ENCODE measurements at regions of chr17 and their contacts with region 1.

Region 1: GRCh38 chr17:44947461-44948314 is at the start of gene KIF18B:
- DNase-seq: peak; percentile 95 to 96
- H3K4me3 ChIP-seq: peak within 1 kb of the TSS; percentile 79
- H3K4me3 Mint-ChIP-seq: peak within 1 kb of the TSS; percentile 90
- H3K27ac Mint-ChIP-seq: peak within 1 kb of the TSS; percentile 92
- H3K4me1 ChIP-seq: peaks cover 8% of the 10 kb centered on the region
- H3K4me1 Mint-ChIP-seq: peaks cover 8% of the 10 kb centered on the region
- H3K27me3 ChIP-seq: no peaks in the 10 kb centered on the region
- H3K27me3 Mint-ChIP-seq: no peaks in the 10 kb centered on the region
- CTCF ChIP-seq: no peak
- total RNA-seq, gene KIF18B: 63.6 and 68.4 TPM in 2 replicates

Region 2: GRCh38 chr17:44899069-44899782 is 48.5 kb before region 1 on chr17 and contains the start of gene EFTUD2:
- CTCF ChIA-PET with region 1: no interaction called
- POLR2A ChIA-PET with region 1: interaction called, 3 read pairs
- intact Hi-C with region 1: loop called (anchors 2 kb)
- DNase-seq: peak; percentile 93 to 94
- H3K4me3 ChIP-seq: peak within 1 kb of the TSS; percentile 60
- H3K4me3 Mint-ChIP-seq: peak within 1 kb of the TSS; percentile 77
- H3K27ac Mint-ChIP-seq: peak within 1 kb of the TSS; percentile 100
- H3K4me1 ChIP-seq: no peaks in the 10 kb centered on the region
- H3K4me1 Mint-ChIP-seq: peaks cover 7% of the 10 kb centered on the region
- H3K27me3 ChIP-seq: no peaks in the 10 kb centered on the region
- H3K27me3 Mint-ChIP-seq: no peaks in the 10 kb centered on the region
- CTCF ChIP-seq: no peak
- total RNA-seq, gene EFTUD2: 175 and 186 TPM in 2 replicates

Region 3: DNA sequence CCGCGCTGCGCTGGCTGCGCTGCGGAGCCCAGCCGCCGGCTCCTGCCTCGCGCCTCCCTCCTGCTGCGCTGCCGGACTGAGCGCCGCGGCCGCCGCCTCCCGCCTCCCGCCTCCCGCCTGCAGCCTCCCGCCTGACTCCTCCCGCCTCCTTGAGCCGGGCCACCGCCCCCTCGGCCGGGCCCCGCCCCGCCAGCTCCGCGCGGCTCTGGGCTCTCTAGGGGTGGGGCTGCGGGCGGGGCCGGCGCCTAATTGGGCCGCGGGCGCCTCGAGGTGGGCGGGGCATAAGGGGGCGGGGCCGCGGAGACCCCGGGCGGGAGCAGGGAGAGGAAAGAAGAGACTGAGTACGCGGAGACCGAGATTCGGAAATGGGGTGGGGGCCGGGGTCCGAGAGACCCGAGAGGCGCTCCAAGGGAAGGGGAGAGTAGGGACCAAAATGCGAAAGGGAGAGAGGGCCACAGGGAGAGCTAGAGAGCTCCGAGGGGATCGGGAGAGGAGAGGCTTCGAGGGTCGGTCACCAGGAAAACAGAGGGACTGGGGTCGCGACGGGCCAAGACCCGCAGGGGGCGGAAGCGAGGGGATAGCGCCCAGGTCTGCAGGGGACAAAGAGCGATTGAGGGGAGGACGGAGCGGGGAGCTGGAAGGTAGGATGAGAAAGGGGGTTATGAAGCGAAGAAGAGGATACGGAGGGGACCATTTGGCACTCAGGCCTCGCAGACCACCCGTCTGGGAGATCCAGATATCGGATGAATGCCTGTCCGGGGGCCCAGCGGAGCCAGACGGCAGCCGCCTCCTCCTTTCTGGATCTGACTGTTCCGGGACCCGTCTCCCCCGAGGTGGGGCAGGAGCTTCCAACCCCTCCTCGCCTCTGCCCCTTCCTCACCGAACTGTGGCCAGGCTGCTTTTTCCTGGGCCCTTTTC is 20.8 kb after region 1 on chr17 and contains the start of gene C1QL1:
- CTCF ChIA-PET with region 1: interaction called, 5 read pairs
- POLR2A ChIA-PET with region 1: interaction called, 10 read pairs
- intact Hi-C with region 1: no loop called
- DNase-seq: peak; percentile 93 to 96
- H3K4me3 ChIP-seq: peak within 1 kb of the TSS; percentile 52
- H3K4me3 Mint-ChIP-seq: peak within 1 kb of the TSS; percentile 77
- H3K27ac Mint-ChIP-seq: no peak within 1 kb of the TSS
- H3K4me1 ChIP-seq: peaks cover 6% of the 10 kb centered on the region
- H3K4me1 Mint-ChIP-seq: no peaks in the 10 kb centered on the region
- H3K27me3 ChIP-seq: peaks cover 1% of the 10 kb centered on the region; the same call in 1 of the 2 replicates
- H3K27me3 Mint-ChIP-seq: peaks cover 15% of the 10 kb centered on the region
- CTCF ChIP-seq: peak; percentile 30 to 63
- total RNA-seq, gene C1QL1: 2.5 and 5.2 TPM in 2 replicates

Measured in Caco-2 (cell line).